HEK293 (cell line): ENCODE measurements at regions of chr7 and their contacts with region 1.

Region 1: DNA sequence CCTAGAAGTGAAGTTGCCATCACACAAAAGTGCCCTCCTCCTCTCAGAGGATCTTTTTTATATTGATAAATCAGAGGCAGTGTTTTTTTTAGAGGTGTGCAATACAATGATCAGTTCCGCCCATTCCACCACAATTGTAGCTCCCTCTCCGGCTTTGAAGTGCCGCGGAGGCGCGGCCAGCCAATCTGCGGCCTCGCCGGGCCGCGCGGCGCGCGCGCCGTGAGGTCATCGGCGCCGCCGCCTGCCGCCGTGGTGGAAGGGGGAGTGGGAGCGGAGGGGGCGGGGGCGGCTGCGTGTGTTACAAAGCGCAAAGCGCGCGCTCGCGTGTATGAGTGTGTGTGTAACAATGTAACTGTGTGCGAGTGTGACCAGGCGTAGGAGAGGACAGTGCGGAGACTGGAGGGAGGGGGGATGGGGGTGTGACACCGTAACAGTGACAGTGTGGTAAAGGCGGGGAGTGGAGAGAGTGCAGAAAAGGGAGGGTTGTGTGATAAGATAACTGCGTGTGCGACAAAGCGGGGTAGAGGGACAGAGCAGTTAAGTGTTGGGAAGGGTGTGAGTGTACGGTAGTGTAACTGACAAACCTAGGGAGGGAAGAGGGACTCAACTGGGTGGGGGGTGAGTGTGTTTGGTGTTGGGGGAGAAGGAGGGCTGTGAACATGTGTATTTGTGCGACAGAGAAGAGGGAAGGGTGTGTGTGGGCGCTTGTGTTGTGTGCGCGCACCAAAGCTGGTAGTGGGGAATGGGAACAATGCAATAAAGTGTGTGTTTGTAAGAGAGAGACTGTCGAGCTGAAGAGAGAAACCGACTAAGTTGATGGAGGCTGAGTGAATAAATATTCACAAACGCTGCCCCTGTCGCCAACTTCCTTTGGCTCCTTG is at the start of gene SP8:
- H3K4me3 ChIP-seq: peak within 1 kb of the TSS; percentile 78
- H3K27ac ChIP-seq: peak within 1 kb of the TSS; percentile 34; the same call in 1 of the 2 replicates
- H3K4me1 ChIP-seq: no peaks in the 10 kb centered on the region
- CTCF ChIP-seq: no peak

Region 2: GRCh38 chr7:20798081-20798693 is 11.2 kb after region 1 on chr7:
- CTCF ChIA-PET with region 1: no interaction called
- POLR2A ChIA-PET with region 1: interaction called, 15 read pairs
- H3K4me3 ChIP-seq: peak overlapping the region; percentile 66
- H3K27ac ChIP-seq: peak overlapping the region; percentile 78; the same call in 1 of the 2 replicates
- H3K4me1 ChIP-seq: no peaks in the 10 kb centered on the region; the same call in 1 of the 2 replicates
- CTCF ChIP-seq: no peak

Region 3: DNA sequence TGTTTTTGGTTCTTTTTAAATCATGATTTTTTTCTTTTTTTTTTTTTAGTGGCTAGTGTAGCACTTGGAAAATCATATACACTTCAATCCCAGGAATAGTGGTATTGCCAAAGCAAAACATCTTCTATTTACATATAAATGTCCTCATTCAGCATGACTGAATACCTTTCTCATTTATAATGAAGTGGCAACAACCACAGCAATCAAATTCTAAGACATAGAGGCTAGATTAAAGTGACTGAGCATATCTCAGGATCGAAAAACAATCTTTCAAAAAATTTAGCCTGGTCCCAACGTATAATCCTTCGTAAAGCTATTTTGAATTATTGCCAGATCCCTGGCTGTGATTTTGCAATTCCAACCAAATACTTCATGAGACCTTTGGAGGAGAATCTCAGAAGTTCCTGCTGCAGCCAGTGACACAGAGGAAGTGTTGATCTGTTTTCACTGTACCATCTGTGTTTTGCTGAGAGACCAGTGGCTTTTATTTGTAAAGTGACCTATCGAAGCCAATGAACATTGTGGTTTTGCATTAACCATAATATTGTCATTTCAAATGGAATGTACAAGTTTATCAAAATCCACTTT is 29.4 kb after region 1 on chr7:
- CTCF ChIA-PET with region 1: no interaction called
- POLR2A ChIA-PET with region 1: no interaction called
- H3K4me3 ChIP-seq: no peak overlapping the region
- H3K27ac ChIP-seq: no peak overlapping the region
- H3K4me1 ChIP-seq: no peaks in the 10 kb centered on the region
- CTCF ChIP-seq: no peak